Left colon (tissue), 2 donors: ENCODE measurements at regions of chrX and their contacts with region 1.

Region 1: DNA sequence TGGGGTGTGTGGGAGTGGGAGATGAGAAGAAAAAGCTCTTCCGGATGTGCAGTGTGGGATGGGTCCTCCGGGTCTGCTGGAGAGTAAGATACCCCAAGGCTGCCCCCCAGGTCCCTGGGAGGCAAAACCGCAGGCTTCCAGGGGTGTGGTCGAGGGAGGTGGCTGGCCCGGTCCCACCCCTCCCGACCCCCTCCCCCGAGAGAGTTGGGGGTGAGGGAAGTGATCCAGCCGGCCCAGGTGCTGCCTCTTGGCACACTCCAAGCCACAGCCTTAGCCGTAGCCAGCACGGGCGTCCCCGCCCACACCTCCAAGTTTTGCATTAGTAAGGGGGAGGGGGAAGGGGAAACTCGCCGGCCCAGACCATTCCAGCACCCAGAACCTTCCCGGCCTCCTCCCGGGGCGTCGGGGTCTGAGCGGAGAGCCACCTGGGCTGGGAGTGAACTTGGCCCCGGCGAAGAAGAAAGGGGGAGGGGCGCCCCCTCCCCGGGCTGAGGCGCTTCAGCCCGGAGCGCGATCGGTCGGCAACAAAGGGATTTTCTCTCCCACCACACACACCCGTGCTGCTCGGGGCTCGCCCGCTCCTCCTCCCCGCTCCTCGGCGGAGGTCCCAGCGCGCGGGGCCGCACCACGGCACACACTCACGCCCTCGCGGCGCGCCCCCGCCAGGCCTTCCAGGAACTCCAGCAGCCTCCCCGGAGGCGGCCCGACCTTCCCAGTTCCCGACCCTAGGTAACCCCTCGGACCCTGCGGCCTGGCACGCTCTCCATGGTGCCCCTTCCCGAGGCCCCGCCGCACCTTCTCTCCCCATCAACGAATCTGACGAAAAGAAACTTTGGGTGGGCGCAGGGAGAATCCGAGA is 14.4 kb downstream of the BCOR start:
- DNase-seq: peak in 1 of 2 donors; percentile 44
- ATAC-seq: peak; percentile 59

Region 2: GRCh38 chrX:39957816-39958566 is 125.4 kb before region 1 on chrX:
- intact Hi-C with region 1: no loop called
- DNase-seq: no peak
- ATAC-seq: peak; percentile 55

Region 3: DNA sequence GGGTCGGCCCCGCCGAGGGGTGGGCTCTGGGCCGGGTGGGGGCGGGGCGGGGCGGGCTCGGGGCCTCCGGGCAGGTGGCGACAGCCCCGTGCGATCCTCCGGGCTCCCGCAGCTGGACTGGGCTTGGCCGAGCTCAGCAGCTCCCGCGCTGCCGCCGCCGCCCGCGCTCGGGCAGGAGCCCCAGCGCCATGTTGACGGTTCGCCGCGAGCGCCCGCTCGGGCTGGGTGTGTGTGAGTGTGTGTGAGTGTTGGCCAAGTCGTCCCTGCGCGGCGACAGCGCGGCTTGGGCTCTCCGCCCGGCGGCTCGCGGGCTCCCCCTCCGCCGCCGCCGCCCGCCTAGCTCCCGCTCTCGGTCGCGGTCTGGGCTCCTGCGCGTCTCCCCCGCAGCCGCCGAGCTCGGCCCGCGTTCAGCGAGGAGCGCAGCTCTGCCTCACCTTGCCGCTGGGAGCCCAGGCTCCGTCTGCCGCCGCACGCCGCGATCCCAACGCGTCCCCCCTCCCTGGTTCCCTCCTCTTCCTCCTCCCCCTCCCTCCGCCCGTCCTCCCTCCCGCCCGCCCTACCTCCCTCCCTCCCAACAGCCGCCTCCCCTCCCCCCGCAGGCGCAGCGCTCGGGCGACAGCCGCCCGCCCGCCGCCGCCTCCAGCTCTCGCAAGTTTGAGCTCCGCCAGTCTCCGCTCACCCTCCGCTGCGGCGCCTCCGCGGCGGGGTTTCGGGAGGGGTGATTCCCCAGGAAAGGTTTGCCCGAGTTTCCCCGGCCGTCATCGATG is 14.3 kb after region 1 on chrX and contains the start of gene BCOR:
- intact Hi-C with region 1: no loop called
- DNase-seq: peak; percentile 79 to 80
- ATAC-seq: peak; percentile 59
- total RNA-seq, gene BCOR: 19.0 to 24.4 TPM

Region 4: DNA sequence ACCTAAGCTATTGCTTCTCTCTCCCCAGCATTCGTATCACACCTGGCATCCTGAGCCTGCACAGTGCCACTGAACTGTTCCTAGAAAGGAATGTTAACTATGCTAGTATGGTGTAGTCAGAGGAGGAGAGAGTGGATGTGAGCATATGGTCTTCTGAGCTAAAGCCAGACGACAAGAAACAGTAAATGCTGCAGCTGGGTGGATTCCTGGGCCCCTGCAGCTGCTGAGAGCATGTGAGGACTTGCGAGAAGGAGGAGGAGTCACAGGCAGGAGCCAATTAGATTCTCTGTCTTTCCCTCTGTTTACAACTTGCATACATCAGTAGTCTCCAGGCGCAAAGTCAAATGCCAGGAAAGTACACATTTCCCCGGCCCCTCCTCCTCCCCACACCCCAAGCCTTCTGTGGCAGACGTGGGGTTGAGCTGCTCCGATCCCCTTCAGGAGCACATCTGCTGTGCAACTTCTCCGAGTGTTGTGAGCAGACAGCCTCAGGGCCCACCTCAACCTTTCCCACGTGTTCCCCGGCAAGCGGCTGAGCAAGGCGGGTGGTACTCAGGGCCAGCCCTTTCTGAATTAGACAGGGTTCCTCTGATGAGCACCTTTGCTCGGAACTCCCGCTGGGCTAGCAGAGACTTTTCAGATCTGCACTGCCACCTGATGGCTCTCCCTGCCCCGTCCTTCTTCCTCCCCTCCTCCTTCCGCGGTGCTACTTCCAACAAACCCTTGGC is 388.7 kb after region 1 on chrX:
- intact Hi-C with region 1: loop called in 1 of 2 experiments (anchors 10 kb)
- DNase-seq: peak; percentile 32 to 52
- ATAC-seq: peak; percentile 57